ENCODE measurements at regions of chr10 and their contacts with region 1.

Region 1: GRCh38 chr10:49518982-49519578 is 19.8 kb downstream of the ERCC6 start:
- DNase-seq: no peak
- H3K4me3 ChIP-seq: no peak overlapping the region
- H3K27ac ChIP-seq: no peak overlapping the region
- H3K4me1 ChIP-seq: no peaks in the 10 kb centered on the region
- H3K27me3 ChIP-seq: no peaks in the 10 kb centered on the region
- CTCF ChIP-seq: peak; percentile 21 to 57 (median 33)

Region 2: GRCh38 chr10:49538381-49539319 is 19.6 kb after region 1 on chr10 and contains the start of gene ERCC6:
- intact Hi-C with region 1: loop called (anchors 2 kb)
- DNase-seq: peak; percentile 92 to 99
- H3K4me3 ChIP-seq: peak within 1 kb of the TSS; percentile 74 to 86
- H3K27ac ChIP-seq: peak within 1 kb of the TSS; percentile 87 to 94
- H3K4me1 ChIP-seq: peaks cover 11 to 35% of the 10 kb centered on the region in 2 donors
- H3K27me3 ChIP-seq: no peaks in the 10 kb centered on the region
- CTCF ChIP-seq: peak in 2 of 3 experiments; percentile 12 to 13
- total RNA-seq, gene ERCC6: 16.2 TPM

Measured in ascending aorta (tissue), 2 donors.